ENCODE measurements at regions of chr9 and their contacts with region 1.

Region 1: DNA sequence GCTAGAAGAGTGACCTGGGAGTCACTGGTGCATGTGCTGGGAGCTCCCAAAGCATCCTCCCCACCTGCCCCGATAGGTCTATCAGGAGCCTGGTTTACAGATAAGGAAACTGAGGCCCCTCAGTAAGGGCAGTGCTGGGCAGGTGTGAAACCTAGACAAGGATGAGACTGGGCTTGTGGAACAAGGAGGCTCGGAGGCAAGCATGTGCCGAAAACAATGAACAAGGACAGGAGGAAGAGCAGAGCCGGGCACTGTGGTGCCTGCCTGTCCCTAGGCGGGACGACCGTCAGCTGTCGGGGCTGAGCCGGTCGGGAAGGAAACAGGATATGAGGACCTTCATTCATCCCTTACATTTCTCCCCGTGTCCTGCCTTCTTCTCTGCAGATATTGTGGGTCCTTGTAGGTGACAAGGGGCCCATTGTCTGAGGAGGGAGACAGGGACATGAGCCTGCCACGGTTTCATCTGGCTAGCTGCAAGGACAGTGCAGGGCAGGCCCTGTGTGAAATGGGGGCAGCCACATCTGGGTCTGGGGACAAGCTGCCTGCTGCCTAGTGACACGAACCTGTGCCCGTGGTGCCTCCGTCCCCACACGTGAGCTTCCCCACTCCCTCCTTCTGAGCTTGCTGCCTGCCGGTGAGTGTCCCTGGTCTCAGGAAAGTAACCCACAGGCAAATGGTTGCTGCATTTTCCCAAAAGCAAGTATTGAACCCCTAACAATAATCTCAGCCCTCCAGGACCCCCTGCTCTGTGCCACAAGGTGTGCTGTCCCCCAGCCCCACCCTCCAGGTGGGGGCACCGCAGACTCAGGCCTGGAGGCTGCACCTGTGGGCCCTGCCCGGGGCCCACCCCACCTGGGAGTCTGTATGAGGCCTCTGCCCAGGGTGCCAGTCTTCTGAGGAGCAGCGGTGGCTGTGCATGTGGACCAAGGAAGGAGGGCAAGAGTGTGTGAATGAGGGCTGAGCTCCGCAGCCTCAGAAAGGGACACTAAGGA is 18.7 kb downstream of the FGD3 start:
- DNase-seq: no peak
- H3K4me3 Mint-ChIP-seq: peak overlapping the region; percentile 86
- H3K27ac Mint-ChIP-seq: peak overlapping the region; percentile 99
- H3K4me1 Mint-ChIP-seq: peaks cover 65% of the 10 kb centered on the region
- H3K27me3 Mint-ChIP-seq: no peaks in the 10 kb centered on the region

Region 2: GRCh38 chr9:92986176-92987085 is 20.4 kb after region 1 on chr9:
- CTCF ChIA-PET with region 1: interaction called, 12 read pairs
- DNase-seq: peak; percentile 63
- H3K4me3 Mint-ChIP-seq: no peak overlapping the region
- H3K27ac Mint-ChIP-seq: peak overlapping the region; percentile 80
- H3K4me1 Mint-ChIP-seq: peaks cover 75% of the 10 kb centered on the region
- H3K27me3 Mint-ChIP-seq: no peaks in the 10 kb centered on the region

Region 3: DNA sequence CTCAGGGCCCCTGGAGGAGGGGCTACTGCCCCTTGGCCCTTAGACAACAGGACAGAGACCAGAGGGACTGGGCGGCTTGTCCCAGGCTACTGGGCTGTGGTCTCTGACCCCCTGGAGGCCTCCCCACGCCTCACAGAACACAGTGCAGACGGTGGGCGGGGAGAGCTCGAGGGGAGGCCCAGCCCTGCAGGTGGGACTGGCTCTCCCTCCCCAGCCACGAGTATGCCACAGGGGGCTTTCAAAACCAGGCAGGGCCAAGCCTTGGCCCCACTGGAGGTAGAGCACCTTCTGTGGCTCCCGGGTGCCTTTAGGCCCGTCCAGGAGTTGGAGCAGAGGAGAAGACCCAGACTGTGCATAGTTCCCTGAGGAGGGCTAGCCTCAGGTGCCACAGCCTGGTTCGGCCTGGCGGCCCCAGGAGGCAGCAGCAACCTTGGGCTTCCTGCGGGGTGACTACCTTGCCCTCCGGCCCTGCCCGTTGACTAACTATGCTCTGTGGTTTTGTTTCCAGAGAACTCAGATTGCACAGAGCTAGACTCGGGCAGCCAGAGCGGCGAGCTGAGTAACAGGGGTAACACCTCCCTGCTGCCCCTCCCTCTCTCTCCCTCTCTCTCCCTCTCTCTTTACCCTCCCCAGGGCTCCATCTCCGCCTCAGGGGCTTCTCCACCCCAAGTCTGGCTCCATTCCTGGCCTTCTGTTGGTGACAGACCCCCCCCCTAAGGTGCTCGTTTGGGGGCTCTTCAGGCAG is 145.5 kb after region 1 on chr9:
- CTCF ChIA-PET with region 1: no interaction called
- DNase-seq: no peak
- H3K4me3 Mint-ChIP-seq: no peak overlapping the region
- H3K27ac Mint-ChIP-seq: no peak overlapping the region
- H3K4me1 Mint-ChIP-seq: peaks cover 36% of the 10 kb centered on the region
- H3K27me3 Mint-ChIP-seq: no peaks in the 10 kb centered on the region

Measured in activated naive CD4-positive, alpha-beta T cell treated with anti-CD3 and anti-CD28 coated beads, Interleukin-2, amount 10 ng/mL, durations not matched to agents 7 days and 5 days (primary cell).